RWPE1 (cell line): ENCODE measurements at regions of chr16 and their contacts with region 1.

Region 1: DNA sequence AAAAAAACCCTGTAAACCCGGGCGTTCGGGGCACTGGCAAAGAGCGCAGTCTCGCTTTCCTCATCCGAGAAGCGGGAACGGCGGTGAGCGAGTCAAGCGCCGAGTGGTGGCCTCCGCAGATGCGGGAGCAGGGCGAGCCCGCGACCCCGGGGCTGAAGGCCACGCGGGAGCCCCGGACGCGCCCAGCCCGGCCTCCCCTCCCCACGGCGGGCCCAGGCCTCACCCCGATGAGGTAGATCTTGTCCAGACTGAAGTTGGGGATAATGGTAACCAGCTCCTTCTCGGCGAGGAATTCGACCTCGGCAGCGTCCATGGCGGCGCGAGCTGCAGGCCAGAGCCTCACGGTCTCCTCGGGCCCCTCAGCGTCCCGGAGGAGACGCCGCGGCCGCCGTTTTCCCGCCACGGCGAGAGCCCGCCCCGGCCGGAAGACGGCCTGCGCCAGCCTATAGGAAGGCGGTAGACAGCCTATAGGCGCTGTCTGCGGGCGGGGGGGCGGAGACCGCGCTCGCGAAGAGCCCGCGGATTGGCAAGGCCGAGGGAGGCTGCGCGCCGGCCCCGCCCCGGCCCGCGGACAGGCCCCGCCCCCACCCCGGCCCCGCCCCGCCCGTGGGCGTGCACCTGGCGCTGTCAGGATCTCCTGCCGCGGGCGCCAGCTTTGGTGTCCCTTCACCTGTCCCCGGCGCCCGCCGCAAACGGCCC is at the start of gene GINS2:
- DNase-seq: peak; percentile 98
- H3K27ac ChIP-seq: peak within 1 kb of the TSS; percentile 70
- CTCF ChIP-seq: no peak

Region 2: GRCh38 chr16:85935974-85936760 is 247.4 kb after region 1 on chr16:
- CTCF ChIA-PET with region 1: no interaction called
- POLR2A ChIA-PET with region 1: interaction called, 15 read pairs
- DNase-seq: no peak
- H3K27ac ChIP-seq: no peak overlapping the region
- CTCF ChIP-seq: no peak